ENCODE measurements at regions of chr16 and their contacts with region 1.

Region 1: DNA sequence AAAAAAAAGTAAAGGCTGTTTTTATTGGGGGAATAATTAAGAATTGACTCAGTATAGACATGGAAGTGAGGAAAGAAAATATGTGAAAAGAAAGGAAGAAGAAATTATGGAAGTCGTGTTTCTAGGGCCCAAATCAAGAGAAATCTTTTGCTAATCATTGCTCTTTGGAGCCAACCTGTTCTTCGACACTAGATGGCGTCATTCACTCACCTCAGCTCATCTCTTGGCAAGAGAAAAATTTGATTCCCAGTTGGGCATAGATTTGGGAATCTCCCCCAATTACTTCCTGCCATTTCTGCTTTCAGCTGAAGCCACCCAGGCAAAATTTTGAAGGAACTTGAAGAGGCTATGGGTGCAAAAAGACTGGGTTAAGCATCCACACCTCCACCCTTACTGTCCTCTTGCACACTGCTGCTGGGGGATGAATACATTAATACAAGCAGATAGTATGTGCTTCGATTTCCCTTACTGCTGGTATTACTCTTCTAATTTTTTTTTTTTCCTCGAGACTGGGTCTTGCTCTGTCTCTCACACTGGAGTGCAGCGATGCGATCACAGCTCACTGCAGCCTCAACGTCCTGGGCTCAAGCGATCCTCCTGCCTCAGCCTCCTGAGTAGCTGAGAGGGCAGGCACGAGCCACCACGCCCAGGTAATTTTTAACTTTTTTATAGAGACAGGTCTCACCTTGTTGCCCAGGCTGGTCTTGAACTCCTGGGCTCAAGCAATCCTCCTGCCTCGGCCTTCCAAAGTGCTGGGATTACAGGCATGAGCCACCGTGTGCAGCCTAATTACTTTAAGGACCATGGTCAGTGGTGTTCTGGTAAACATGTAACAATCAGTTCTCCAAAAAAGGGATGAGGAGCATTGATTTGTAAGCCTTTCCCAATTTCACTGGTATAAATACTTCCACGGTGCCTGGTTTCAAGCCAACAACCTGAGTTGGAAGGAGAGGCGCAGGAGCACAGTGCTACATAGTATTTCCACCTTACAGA is 13.5 kb downstream of the PSMD7 start:
- DNase-seq: no peak
- ATAC-seq: no peak
- H3K4me3 ChIP-seq: no peak overlapping the region
- H3K27ac ChIP-seq: no peak overlapping the region
- H3K4me1 ChIP-seq: no peaks in the 10 kb centered on the region
- H3K27me3 ChIP-seq: no peaks in the 10 kb centered on the region

Region 2: DNA sequence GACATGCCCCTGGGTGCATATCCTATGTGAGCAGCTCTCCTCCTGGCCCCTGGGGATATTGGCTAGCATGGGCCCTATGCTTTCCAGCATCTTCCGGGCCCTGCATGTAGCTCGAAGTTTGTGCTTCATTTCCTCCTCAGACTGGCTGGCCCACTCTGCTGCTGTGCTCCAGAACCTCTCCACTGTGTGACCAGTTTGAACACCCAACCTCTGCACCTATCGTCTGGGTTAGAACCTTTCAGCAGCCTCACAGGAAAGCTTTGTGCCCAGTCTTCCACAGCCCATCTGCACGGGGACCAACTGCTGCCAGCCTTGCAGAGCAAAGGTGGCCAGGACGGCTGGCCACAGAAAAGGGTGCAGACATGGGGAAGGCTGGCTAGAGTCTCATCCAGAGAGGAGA is 121.4 kb after region 1 on chr16:
- intact Hi-C with region 1: loop called in 1 of 2 experiments (anchors 5 kb)
- DNase-seq: peak; percentile 19 to 30
- ATAC-seq: no peak
- H3K4me3 ChIP-seq: no peak overlapping the region
- H3K27ac ChIP-seq: no peak overlapping the region
- H3K4me1 ChIP-seq: no peaks in the 10 kb centered on the region
- H3K27me3 ChIP-seq: no peaks in the 10 kb centered on the region